Naive thymus-derived CD4-positive, alpha-beta T cell (primary cell): ENCODE measurements at regions of chr4 and their contacts with region 1.

Region 1: GRCh38 chr4:53196882-53197771 is 168.7 kb downstream of the SCFD2 start:
- DNase-seq: peak in 7 of 9 donors; percentile 13 to 60 (median 53)
- ATAC-seq: peak; percentile 61
- H3K4me3 ChIP-seq: no peak overlapping the region
- H3K4me3 Mint-ChIP-seq: no peak overlapping the region
- H3K27ac ChIP-seq: no peak overlapping the region
- H3K27ac Mint-ChIP-seq: peak overlapping the region in 1 of 9 donors; percentile 62
- H3K4me1 ChIP-seq: no peaks in the 10 kb centered on the region
- H3K4me1 Mint-ChIP-seq: no peaks in the 10 kb centered on the region
- H3K27me3 ChIP-seq: no peaks in the 10 kb centered on the region
- H3K27me3 Mint-ChIP-seq: no peaks in the 10 kb centered on the region

Region 2: GRCh38 chr4:53015681-53016080 is 181.4 kb before region 1 on chr4:
- CTCF ChIA-PET with region 1: no interaction called
- POLR2A ChIA-PET with region 1: no interaction called
- intact Hi-C with region 1: loop called in 1 of 2 experiments (anchors 10 kb)
- DNase-seq: no peak
- ATAC-seq: no peak
- H3K4me3 ChIP-seq: no peak overlapping the region
- H3K4me3 Mint-ChIP-seq: no peak overlapping the region
- H3K27ac ChIP-seq: no peak overlapping the region
- H3K27ac Mint-ChIP-seq: no peak overlapping the region
- H3K4me1 ChIP-seq: peaks cover 0 to 27% of the 10 kb centered on the region in 2 donors
- H3K4me1 Mint-ChIP-seq: peaks cover 15 to 43% (median 37%) of the 10 kb centered on the region in 7 donors
- H3K27me3 ChIP-seq: no peaks in the 10 kb centered on the region
- H3K27me3 Mint-ChIP-seq: no peaks in the 10 kb centered on the region

Region 3: DNA sequence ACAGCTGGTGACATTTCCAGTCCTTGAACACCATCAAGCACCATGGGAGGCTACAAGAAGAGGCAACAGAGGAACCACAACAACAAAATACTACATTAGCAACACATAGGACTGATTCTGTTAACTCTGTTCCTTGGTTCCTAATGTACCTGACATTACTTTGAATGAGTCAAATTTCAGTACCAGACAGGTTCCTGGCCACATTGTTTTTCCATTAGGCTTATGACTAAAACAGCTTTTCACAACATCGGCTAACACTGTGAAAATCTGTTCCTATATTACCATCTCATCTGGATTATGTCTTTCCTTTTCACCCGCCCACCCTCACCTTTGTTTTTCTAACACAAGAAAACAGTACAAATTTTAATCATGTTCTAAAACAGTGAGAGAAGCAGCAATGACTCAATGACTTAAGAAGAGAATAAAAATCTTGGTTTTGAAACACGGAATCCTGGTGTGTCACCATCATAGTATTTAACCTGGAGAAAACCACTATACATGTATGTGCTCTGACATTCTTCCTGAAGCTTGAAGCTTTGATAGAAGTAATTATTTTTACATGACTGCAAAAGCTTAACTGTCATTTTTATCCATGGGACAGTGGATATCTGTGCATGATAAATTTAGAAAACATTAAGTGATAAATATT is 24.8 kb after region 1 on chr4:
- CTCF ChIA-PET with region 1: no interaction called
- POLR2A ChIA-PET with region 1: no interaction called
- intact Hi-C with region 1: no loop called
- DNase-seq: no peak
- ATAC-seq: no peak
- H3K4me3 ChIP-seq: no peak overlapping the region
- H3K4me3 Mint-ChIP-seq: no peak overlapping the region
- H3K27ac ChIP-seq: no peak overlapping the region
- H3K27ac Mint-ChIP-seq: no peak overlapping the region
- H3K4me1 ChIP-seq: no peaks in the 10 kb centered on the region
- H3K4me1 Mint-ChIP-seq: peaks cover 0 to 11% (median 0%) of the 10 kb centered on the region in 7 donors
- H3K27me3 ChIP-seq: no peaks in the 10 kb centered on the region
- H3K27me3 Mint-ChIP-seq: no peaks in the 10 kb centered on the region

Region 4: DNA sequence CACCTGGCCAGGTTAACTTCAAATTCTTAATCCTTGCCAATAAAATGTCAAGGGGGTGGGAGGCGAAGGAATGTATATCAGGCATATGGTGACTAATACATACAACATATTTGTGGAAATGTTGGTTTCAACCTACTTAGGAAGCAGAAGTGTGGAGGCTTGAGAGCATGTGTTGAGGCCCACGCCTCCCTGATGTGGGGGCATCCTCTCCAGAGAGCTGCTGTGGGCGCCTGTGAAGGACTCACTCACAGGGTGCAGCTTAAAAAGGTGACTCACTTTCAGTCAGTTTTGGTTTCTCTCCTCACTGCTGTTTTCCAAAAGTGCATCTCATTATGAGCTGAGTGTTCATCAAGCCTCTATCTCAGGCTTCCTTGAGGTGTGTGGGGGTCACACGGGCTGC is 366.7 kb after region 1 on chr4:
- CTCF ChIA-PET with region 1: no interaction called
- POLR2A ChIA-PET with region 1: no interaction called
- intact Hi-C with region 1: no loop called
- DNase-seq: peak in 1 of 9 donors; percentile 25
- ATAC-seq: no peak
- H3K4me3 ChIP-seq: no peak overlapping the region
- H3K4me3 Mint-ChIP-seq: no peak overlapping the region
- H3K27ac ChIP-seq: no peak overlapping the region
- H3K27ac Mint-ChIP-seq: no peak overlapping the region
- H3K4me1 ChIP-seq: no peaks in the 10 kb centered on the region
- H3K4me1 Mint-ChIP-seq: no peaks in the 10 kb centered on the region
- H3K27me3 ChIP-seq: no peaks in the 10 kb centered on the region
- H3K27me3 Mint-ChIP-seq: peaks cover 0 to 16% (median 4%) of the 10 kb centered on the region in 5 donors

Region 5: GRCh38 chr4:53804719-53805118 is 607.6 kb after region 1 on chr4:
- CTCF ChIA-PET with region 1: no interaction called
- POLR2A ChIA-PET with region 1: no interaction called
- intact Hi-C with region 1: loop called in 1 of 2 experiments (anchors 2 kb)
- DNase-seq: peak in 2 of 9 donors; percentile 2 to 22
- ATAC-seq: peak; percentile 26
- H3K4me3 ChIP-seq: no peak overlapping the region
- H3K4me3 Mint-ChIP-seq: no peak overlapping the region
- H3K27ac ChIP-seq: no peak overlapping the region
- H3K27ac Mint-ChIP-seq: no peak overlapping the region
- H3K4me1 ChIP-seq: no peaks in the 10 kb centered on the region
- H3K4me1 Mint-ChIP-seq: no peaks in the 10 kb centered on the region
- H3K27me3 ChIP-seq: no peaks in the 10 kb centered on the region
- H3K27me3 Mint-ChIP-seq: peaks cover 0 to 22% (median 4%) of the 10 kb centered on the region in 5 donors

Region 6: DNA sequence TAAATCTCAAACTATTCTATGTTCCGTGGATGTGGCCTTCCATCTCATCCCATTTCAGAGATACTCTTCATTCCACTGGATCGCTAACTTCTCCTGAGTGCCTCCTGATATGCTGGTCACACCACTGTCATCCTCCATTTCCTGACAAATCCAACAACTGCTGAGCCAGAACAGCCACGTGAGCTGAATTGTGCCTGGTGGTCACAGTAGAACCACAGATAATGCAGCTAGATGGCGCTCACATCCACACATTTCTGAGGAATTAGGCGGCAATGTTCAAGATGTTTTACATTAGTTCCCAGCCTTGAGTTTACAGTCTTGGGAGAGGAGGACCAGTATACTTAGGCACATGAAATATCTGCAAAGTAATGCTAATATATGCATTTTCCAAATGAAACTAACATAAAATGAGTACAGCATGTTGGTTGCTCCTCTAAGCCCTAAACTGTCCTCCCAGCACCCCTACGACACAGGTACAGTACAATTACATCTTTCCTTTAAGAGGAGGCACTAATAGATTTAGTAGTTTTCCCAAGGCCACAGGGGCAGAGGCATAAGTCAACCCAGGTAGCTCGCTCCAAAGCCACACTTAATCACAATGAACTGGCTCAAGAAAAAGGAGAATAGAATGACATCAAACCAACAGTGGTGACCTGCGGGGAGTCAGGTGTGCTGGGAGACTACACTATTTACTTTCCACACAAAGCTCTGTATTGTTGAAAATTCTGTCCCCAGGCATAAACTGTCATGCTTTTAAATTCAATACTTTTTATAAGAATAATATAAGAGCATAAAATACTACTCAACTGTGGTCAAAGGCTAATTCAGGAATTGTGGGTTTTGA is 733.0 kb after region 1 on chr4:
- CTCF ChIA-PET with region 1: no interaction called
- POLR2A ChIA-PET with region 1: no interaction called
- intact Hi-C with region 1: loop called in 1 of 2 experiments (anchors 1 kb)
- DNase-seq: peak in 8 of 9 donors; percentile 24 to 56 (median 49)
- ATAC-seq: peak; percentile 80
- H3K4me3 ChIP-seq: no peak overlapping the region
- H3K4me3 Mint-ChIP-seq: no peak overlapping the region
- H3K27ac ChIP-seq: no peak overlapping the region
- H3K27ac Mint-ChIP-seq: no peak overlapping the region
- H3K4me1 ChIP-seq: no peaks in the 10 kb centered on the region
- H3K4me1 Mint-ChIP-seq: no peaks in the 10 kb centered on the region
- H3K27me3 ChIP-seq: no peaks in the 10 kb centered on the region
- H3K27me3 Mint-ChIP-seq: peaks cover 2 to 12% (median 11%) of the 10 kb centered on the region in 5 donors

Region 7: GRCh38 chr4:54217642-54218495 is 1020.7 kb after region 1 on chr4:
- CTCF ChIA-PET with region 1: no interaction called
- POLR2A ChIA-PET with region 1: no interaction called
- intact Hi-C with region 1: loop called (anchors 1 kb)
- DNase-seq: peak in 8 of 9 donors; percentile 35 to 73 (median 58)
- ATAC-seq: peak; percentile 83
- H3K4me3 ChIP-seq: no peak overlapping the region
- H3K4me3 Mint-ChIP-seq: peak overlapping the region in 8 of 10 donors; percentile 29 to 56 (median 50)
- H3K27ac ChIP-seq: no peak overlapping the region
- H3K27ac Mint-ChIP-seq: no peak overlapping the region
- H3K4me1 ChIP-seq: peaks cover 0 to 5% of the 10 kb centered on the region in 2 donors
- H3K4me1 Mint-ChIP-seq: peaks cover 0 to 7% (median 5%) of the 10 kb centered on the region in 7 donors
- H3K27me3 ChIP-seq: peaks cover 0 to 3% of the 10 kb centered on the region in 2 donors
- H3K27me3 Mint-ChIP-seq: peaks cover 27 to 60% (median 43%) of the 10 kb centered on the region in 5 donors